Cardiac septum (tissue), 1 donor: ENCODE measurements at regions of chr6 and their contacts with region 1.

Region 1: DNA sequence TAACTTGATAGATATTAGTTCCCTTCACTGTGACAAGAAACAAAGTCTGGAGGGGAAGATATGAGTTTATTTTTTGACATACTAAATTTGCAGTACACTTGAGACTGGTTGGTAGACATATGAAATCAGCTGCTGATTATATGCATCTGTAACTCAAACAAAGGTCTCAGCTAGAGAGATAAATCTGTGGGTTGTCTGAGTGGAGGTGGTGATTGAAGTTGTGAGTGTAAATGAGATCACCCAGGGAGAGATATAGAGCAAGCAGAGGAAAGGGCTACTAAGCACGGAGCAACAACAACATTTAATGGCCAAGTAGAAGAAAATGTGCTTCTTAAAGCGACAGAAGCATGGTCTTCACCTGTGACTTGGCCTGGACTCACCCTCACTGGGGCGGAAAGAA is 173.2 kb upstream of the EYA4 start:
- DNase-seq: no peak

Region 2: GRCh38 chr6:133130863-133131262 is 62.9 kb after region 1 on chr6:
- intact Hi-C with region 1: loop called (anchors 5 kb)
- DNase-seq: peak; percentile 87

Region 3: DNA sequence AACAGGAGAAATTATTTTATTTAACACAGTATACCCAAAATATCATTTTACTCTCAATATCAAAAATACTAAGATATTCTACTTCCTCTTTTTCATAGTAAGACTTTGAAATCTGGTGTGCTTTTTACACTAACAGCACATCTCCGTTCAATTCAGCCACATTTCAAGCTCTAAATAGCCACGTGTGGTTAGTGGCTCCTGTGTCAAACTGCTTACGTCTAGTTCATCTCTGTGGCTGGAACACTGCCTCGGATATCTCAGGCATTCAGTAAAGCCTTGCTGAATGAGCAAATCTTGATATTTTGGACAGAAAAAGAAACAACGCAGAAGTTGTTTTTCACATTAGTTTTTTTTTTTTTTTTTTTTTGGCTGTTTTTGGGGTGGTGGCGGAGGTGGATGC is 309.3 kb after region 1 on chr6:
- intact Hi-C with region 1: no loop called
- DNase-seq: no peak